ENCODE measurements at regions of chr18 and their contacts with region 1.

Region 1: DNA sequence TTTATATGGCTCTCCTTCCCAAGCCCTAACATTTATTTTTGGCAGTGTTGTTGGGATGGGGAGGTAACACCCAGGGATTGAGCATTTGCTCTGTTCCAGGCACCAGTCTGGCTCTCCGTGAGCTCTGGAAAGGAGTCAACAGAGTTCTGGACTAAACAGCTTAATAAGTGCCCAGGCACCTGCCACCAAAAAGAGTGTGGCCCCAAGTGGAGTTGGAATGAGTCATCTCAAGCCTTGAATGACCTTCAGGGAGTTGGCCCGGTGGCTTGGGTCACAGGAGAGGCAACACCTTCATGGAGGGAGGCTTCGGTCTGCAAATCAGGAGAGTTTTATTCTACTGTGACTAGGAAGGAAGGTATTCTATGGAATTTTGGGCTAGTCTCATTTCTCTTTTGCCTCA is 203.2 kb downstream of the DLGAP1 start:
- DNase-seq: no peak
- ATAC-seq: peak; percentile 75
- H3K4me3 ChIP-seq: no peak overlapping the region
- H3K27ac ChIP-seq: no peak overlapping the region
- H3K4me1 ChIP-seq: no peaks in the 10 kb centered on the region; the same call in 1 of the 2 replicates
- H3K27me3 ChIP-seq: no peaks in the 10 kb centered on the region
- CTCF ChIP-seq: no peak
- EP300 ChIP-seq: peak; percentile 33 to 40; a peak in 2 of 4 replicates
- POLR2A ChIP-seq: no peak
- RAD21 ChIP-seq: no peak

Region 2: DNA sequence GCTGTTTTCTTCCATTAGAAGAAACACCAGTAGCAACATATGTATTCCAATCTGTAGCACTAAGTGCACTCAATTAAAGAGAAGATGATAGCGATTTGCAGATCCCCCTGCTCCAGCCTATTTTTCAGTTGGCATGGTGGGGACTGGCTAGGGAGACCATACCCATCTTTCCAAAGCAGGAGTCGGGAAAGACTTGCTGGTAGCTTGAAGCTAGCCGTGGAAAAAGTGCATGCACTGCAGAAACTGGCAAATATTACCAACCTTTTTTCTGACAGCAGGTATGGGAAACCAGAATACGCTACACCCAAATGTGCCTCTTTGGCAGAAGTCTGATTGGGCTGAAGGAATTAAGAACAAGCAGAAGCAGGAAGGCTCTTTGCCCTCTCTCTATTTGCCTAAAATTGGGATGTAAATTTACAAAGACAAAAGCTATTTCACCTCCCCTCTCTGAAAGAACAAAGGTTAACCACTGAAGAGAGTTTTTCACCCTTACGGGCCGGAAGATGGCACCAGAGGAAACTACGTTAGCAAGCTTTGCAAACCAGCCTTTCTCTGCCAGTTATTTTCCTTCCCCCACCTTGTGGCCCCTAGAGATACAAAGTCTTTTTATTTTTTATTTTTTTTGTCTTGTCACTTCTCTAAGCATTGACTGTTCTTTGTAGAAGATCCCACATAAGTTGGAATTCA is 69.8 kb before region 1 on chr18:
- CTCF ChIA-PET with region 1: interaction called, 8 read pairs
- POLR2A ChIA-PET with region 1: interaction called, 4 read pairs
- RAD21 ChIA-PET with region 1: interaction called, 7 read pairs
- SMC1A ChIA-PET with region 1: interaction called, 13 read pairs
- in situ Hi-C with region 1: no loop called
- intact Hi-C with region 1: no loop called
- DNase-seq: no peak
- ATAC-seq: peak; percentile 84
- H3K4me3 ChIP-seq: no peak overlapping the region
- H3K27ac ChIP-seq: no peak overlapping the region
- H3K4me1 ChIP-seq: no peaks in the 10 kb centered on the region
- H3K27me3 ChIP-seq: no peaks in the 10 kb centered on the region
- CTCF ChIP-seq: peak in 1 of 3 experiments; percentile 35; a peak in 2 of 6 replicates
- EP300 ChIP-seq: no peak
- POLR2A ChIP-seq: no peak
- RAD21 ChIP-seq: peak; percentile 38

Region 3: DNA sequence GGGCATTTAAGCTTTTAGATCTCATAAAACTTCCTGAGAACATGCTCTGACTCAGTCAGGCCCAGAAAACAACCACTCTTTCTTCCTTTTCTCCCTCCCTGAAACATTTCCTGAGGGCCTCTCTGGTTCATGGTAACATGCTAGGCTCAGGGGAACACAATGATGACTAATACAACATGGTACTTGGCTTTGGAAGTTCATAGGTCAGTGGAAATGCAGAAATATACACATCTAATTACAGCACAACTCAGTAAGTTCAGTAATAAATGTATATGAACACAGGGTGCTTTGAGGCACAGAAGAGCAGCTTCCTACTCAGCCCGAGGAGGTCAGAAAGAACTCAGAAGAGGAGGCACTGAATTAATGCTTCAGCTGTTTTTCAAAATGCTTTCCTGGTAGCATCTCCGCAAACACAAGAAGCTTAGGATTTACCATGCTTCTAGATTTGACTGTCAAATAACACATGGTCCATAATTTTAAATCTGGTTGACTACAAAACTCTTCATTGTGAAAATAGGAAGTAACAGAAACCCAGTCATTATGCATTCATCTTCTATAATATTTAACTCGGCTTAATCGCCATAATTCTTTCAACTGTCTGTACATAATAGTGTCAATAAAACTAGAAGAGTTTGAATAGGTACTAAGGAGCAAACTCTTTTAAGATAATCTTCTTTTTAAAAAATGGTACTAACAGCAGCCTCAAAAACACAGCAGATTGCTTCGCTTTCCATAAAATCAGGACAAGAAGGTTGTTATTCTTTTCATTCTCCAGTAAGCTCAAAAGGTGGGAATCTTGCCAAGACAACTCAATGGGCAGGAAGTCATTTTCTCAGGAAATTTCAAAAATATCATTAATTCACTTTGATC is 48.1 kb before region 1 on chr18:
- CTCF ChIA-PET with region 1: interaction called, 4 read pairs
- POLR2A ChIA-PET with region 1: interaction called, 4 read pairs
- RAD21 ChIA-PET with region 1: interaction called, 5 read pairs
- SMC1A ChIA-PET with region 1: interaction called, 12 read pairs
- in situ Hi-C with region 1: no loop called
- intact Hi-C with region 1: no loop called
- DNase-seq: no peak
- ATAC-seq: peak; percentile 70
- H3K4me3 ChIP-seq: no peak overlapping the region
- H3K27ac ChIP-seq: no peak overlapping the region
- H3K4me1 ChIP-seq: no peaks in the 10 kb centered on the region
- H3K27me3 ChIP-seq: no peaks in the 10 kb centered on the region
- CTCF ChIP-seq: no peak
- EP300 ChIP-seq: no peak
- POLR2A ChIP-seq: no peak
- RAD21 ChIP-seq: no peak

Region 4: GRCh38 chr18:4224031-4224704 is 27.7 kb before region 1 on chr18:
- CTCF ChIA-PET with region 1: interaction called, 3 read pairs
- POLR2A ChIA-PET with region 1: interaction called, 29 read pairs
- RAD21 ChIA-PET with region 1: interaction called, 82 read pairs
- SMC1A ChIA-PET with region 1: interaction called, 70 read pairs
- in situ Hi-C with region 1: no loop called
- intact Hi-C with region 1: no loop called
- DNase-seq: no peak
- ATAC-seq: peak; percentile 82
- H3K4me3 ChIP-seq: no peak overlapping the region
- H3K27ac ChIP-seq: no peak overlapping the region
- H3K4me1 ChIP-seq: no peaks in the 10 kb centered on the region
- H3K27me3 ChIP-seq: no peaks in the 10 kb centered on the region
- CTCF ChIP-seq: no peak
- EP300 ChIP-seq: no peak
- POLR2A ChIP-seq: no peak
- RAD21 ChIP-seq: no peak

Region 5: DNA sequence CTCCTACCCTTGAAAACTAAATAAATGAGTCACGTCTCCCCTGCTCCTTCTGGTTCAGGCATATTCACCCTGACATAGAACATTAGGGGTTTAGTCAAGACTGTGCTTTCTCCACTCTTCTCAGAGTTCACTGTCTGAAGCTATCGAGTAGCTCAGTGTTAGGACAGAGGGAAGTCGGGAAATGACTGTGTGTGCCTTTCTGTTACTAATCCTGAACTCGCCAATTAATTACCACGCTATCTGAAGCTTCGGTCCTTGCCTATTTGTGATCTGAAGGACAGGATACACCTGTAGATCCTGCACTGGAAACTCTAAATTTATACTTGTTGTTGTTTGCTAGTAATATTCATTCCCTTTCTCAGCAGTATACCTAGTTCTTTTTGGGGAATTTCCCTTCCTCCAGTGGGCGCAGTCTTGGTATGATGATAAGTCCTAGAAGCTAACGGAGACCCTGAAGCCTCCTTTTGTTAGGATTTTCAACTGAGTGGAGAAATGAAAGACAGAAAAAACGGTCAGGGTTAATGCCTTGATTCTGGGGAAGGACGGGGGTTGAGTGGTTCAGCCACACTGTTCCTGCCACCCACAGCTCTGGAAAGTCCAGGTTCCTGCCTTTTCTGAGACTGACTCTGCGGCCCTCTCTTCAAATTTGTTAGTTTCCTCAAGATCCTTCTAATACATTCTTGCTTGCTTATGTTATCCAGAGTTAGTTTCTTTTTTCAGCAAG is 14.8 kb before region 1 on chr18:
- CTCF ChIA-PET with region 1: interaction called, 8 read pairs
- POLR2A ChIA-PET with region 1: interaction called, 29 read pairs
- RAD21 ChIA-PET with region 1: interaction called, 82 read pairs
- SMC1A ChIA-PET with region 1: interaction called, 222 read pairs
- in situ Hi-C with region 1: no loop called
- intact Hi-C with region 1: no loop called
- DNase-seq: no peak
- ATAC-seq: peak; percentile 77
- H3K4me3 ChIP-seq: no peak overlapping the region
- H3K27ac ChIP-seq: no peak overlapping the region
- H3K4me1 ChIP-seq: no peaks in the 10 kb centered on the region
- H3K27me3 ChIP-seq: no peaks in the 10 kb centered on the region
- CTCF ChIP-seq: no peak
- EP300 ChIP-seq: peak; percentile 28 to 41; a peak in 1 of 4 replicates
- POLR2A ChIP-seq: no peak
- RAD21 ChIP-seq: no peak

Region 6: GRCh38 chr18:4283746-4284291 is 31.9 kb after region 1 on chr18:
- CTCF ChIA-PET with region 1: interaction called, 5 read pairs
- POLR2A ChIA-PET with region 1: interaction called, 4 read pairs
- RAD21 ChIA-PET with region 1: interaction called, 10 read pairs
- SMC1A ChIA-PET with region 1: interaction called, 19 read pairs
- in situ Hi-C with region 1: no loop called
- intact Hi-C with region 1: no loop called
- DNase-seq: no peak
- ATAC-seq: peak; percentile 45
- H3K4me3 ChIP-seq: no peak overlapping the region
- H3K27ac ChIP-seq: no peak overlapping the region
- H3K4me1 ChIP-seq: no peaks in the 10 kb centered on the region
- H3K27me3 ChIP-seq: no peaks in the 10 kb centered on the region
- CTCF ChIP-seq: no peak
- EP300 ChIP-seq: no peak
- POLR2A ChIP-seq: no peak
- RAD21 ChIP-seq: no peak

Region 7: GRCh38 chr18:4450065-4450658 is 198.3 kb after region 1 on chr18:
- CTCF ChIA-PET with region 1: interaction called, 6 read pairs
- POLR2A ChIA-PET with region 1: interaction called, 7 read pairs
- RAD21 ChIA-PET with region 1: interaction called, 18 read pairs
- SMC1A ChIA-PET with region 1: interaction called, 5 read pairs
- in situ Hi-C with region 1: no loop called
- intact Hi-C with region 1: no loop called
- DNase-seq: no peak
- ATAC-seq: peak; percentile 13
- H3K4me3 ChIP-seq: no peak overlapping the region
- H3K27ac ChIP-seq: no peak overlapping the region
- H3K4me1 ChIP-seq: no peaks in the 10 kb centered on the region
- H3K27me3 ChIP-seq: no peaks in the 10 kb centered on the region
- CTCF ChIP-seq: peak in 2 of 3 experiments; percentile 4 to 43; a peak in 2 of 6 replicates
- EP300 ChIP-seq: no peak
- POLR2A ChIP-seq: no peak
- RAD21 ChIP-seq: no peak

Region 8: GRCh38 chr18:4748975-4749374 is 497.1 kb after region 1 on chr18:
- CTCF ChIA-PET with region 1: no interaction called
- POLR2A ChIA-PET with region 1: no interaction called
- RAD21 ChIA-PET with region 1: no interaction called
- SMC1A ChIA-PET with region 1: no interaction called
- in situ Hi-C with region 1: no loop called
- intact Hi-C with region 1: no loop called
- DNase-seq: no peak
- ATAC-seq: no peak
- H3K4me3 ChIP-seq: no peak overlapping the region
- H3K27ac ChIP-seq: no peak overlapping the region
- H3K4me1 ChIP-seq: no peaks in the 10 kb centered on the region
- H3K27me3 ChIP-seq: no peaks in the 10 kb centered on the region
- CTCF ChIP-seq: no peak
- EP300 ChIP-seq: no peak
- POLR2A ChIP-seq: no peak
- RAD21 ChIP-seq: no peak